HAP-1 (cell line): ENCODE measurements at regions of chr9 and their contacts with region 1.

Region 1: DNA sequence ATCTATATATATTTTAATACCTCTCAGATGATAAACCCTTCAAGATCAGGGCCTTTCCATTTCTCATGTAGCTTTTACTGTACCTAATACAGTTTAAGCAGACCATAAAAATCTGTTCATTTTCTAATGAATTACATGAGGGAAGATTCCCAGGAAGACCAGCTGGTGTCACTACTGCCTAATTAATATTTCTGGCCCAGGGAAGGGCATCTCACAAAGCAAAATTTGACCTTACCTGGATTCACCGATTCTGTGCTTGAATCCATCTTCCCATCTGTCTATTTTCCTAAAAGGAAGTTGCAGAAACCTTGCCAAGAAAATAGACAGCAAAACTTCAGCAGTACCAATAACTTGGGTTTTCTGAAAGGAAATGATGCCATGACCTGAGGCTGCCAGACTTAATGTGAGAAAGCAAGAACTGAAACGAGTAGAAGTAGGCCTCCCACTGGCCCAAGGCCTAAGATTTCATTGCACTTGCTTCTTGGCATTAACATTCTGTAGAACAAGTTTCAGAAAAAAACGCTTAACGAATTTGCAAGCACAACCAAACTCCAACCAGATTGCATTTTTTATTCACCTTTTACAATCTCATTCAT is 83.0 kb upstream of the GLIS3 start:
- DNase-seq: peak; percentile 32 to 40
- H3K4me3 ChIP-seq: no peak overlapping the region
- H3K4me1 ChIP-seq: no peaks in the 10 kb centered on the region
- H3K27me3 ChIP-seq: 0 out of 2 replicates have a peak, but pooled peaks cover 2% of the 10 kb centered on the region

Region 2: DNA sequence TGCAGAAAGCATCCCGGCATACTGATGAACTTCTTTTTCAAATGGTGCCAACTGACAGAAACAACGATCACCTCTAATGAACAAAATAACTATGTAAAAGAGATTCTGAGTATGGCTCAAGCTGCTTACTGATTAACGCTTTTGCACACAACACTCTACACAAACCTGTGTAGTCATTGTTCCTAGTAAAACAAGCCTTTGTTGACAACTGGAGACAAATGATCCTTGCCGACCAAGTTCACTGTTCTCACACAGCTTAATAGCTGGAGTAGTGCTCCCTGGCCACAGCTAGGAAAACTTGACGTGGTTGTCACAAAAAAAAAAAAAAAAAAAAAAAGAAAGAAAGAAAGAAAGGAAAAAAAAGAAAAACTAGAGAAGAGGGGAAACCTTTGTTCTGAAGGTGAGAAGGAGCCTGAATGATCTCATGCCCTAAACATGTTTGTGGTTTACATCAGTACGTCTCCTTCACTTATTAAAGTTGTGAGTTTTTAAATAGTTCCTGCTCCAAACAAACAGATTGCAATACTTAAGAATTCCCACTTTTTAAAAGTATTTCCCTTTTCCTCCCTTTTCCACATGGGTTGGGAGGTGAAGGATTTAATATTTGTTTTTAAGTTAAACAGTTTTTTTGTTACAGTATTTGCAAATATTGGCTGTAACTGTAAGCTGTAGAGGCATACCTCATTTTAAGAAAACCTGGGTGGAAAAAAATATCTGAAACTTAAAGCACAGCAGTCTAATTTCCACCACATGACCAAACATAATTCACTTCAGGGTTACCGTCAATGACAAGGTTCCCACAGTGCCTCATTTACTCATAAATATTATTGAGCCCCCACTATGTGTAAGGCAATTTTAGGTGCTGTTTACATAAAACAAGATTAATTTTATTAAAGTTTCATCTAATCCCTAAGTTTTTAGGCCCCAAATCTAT is 146.7 kb before region 1 on chr9:
- in situ Hi-C with region 1: no loop called
- DNase-seq: peak; percentile 29 to 57
- H3K4me3 ChIP-seq: no peak overlapping the region
- H3K4me1 ChIP-seq: peaks cover 33% of the 10 kb centered on the region
- H3K27me3 ChIP-seq: no peaks in the 10 kb centered on the region

Region 3: GRCh38 chr9:4344946-4345345 is 37.9 kb before region 1 on chr9:
- in situ Hi-C with region 1: no loop called
- DNase-seq: no peak
- H3K4me3 ChIP-seq: no peak overlapping the region
- H3K4me1 ChIP-seq: no peaks in the 10 kb centered on the region
- H3K27me3 ChIP-seq: no peaks in the 10 kb centered on the region

Region 4: DNA sequence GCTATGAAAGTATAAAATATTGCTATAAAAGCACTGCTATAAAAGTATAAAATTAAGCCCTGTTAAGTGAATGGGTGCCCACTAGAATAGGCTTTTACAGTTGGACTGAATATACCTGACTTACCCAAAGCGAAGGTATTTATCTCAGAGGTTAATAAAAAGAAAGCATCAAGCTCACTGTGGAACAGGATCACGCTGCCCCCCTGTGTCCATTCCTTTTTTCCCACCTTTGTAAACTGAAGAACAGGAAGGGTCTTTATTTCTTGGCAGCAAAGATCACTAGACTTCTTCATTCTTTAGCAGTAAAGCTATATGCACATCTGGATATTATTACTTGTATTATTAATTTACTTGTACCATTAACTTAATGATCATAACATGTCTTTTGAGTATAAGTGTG is 257.2 kb after region 1 on chr9:
- in situ Hi-C with region 1: loop called (anchors 25 kb)
- DNase-seq: peak; percentile 36 to 58
- H3K4me3 ChIP-seq: no peak overlapping the region
- H3K4me1 ChIP-seq: no peaks in the 10 kb centered on the region
- H3K27me3 ChIP-seq: no peaks in the 10 kb centered on the region